ENCODE measurements at regions of chr17 and their contacts with region 1.

Region 1: GRCh38 chr17:10646392-10646990 is 10.6 kb downstream of the MYH3 start:
- DNase-seq: no peak
- ATAC-seq: peak; percentile 90
- H3K4me3 ChIP-seq: no peak overlapping the region
- H3K27ac ChIP-seq: no peak overlapping the region
- H3K4me1 ChIP-seq: no peaks in the 10 kb centered on the region
- H3K27me3 ChIP-seq: no peaks in the 10 kb centered on the region
- CTCF ChIP-seq: peak; percentile 85

Region 2: DNA sequence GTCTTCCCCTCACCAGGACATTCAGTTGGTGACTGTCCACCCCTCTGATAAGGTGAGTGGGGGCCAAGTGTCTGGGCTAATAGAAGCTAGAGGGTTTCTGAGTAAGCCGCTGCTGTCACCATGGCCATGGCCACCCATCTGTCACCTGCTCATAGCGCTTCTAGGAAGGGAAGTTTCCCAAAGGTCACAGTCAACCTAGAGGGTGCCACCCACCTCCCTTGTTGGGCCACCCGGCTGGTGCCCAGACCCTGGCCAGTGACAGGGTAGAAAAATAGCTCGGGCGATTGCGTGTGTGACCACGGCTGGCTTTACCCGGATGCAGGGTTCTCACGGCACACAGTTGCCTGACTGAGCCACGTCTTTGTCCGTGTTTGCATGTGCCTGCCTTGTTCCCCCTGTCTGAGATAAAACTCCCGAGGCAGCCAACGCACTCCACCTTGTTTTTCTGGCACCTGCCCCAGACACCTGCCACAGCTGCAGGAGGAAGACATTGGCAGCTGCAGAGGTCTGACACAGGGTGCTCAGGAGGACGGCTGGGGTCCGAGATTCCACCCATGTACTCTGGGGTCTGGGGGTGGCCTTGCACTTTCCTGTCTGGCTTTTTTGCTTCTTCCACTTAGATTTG is 190.6 kb after region 1 on chr17:
- intact Hi-C with region 1: loop called (anchors 10 kb)
- DNase-seq: no peak
- ATAC-seq: peak; percentile 13
- H3K4me3 ChIP-seq: no peak overlapping the region
- H3K27ac ChIP-seq: no peak overlapping the region
- H3K4me1 ChIP-seq: no peaks in the 10 kb centered on the region
- H3K27me3 ChIP-seq: no peaks in the 10 kb centered on the region
- CTCF ChIP-seq: no peak

Measured in upper lobe of right lung (tissue), 1 donor.